GM12878 (cell line): ENCODE measurements at regions of chr17 and their contacts with region 1.

Region 1: GRCh38 chr17:27245230-27245696 is 48.7 kb upstream of the WSB1 start:
- DNase-seq: peak; percentile 51
- ATAC-seq: peak; percentile 94
- H3K4me3 ChIP-seq: no peak overlapping the region
- H3K27ac ChIP-seq: no peak overlapping the region
- H3K4me1 ChIP-seq: peaks cover 28% of the 10 kb centered on the region
- H3K27me3 ChIP-seq: no peaks in the 10 kb centered on the region
- CTCF ChIP-seq: peak; percentile 70 to 96 (median 74); a peak in 5 of 6 replicates
- EP300 ChIP-seq: no peak
- POLR2A ChIP-seq: no peak
- RAD21 ChIP-seq: peak; percentile 93

Region 2: GRCh38 chr17:27181935-27182334 is 63.3 kb before region 1 on chr17:
- CTCF ChIA-PET with region 1: no interaction called
- POLR2A ChIA-PET with region 1: no interaction called
- RAD21 ChIA-PET with region 1: no interaction called
- SMC1A ChIA-PET with region 1: no interaction called
- in situ Hi-C with region 1: no loop called
- intact Hi-C with region 1: no loop called
- DNase-seq: no peak
- ATAC-seq: no peak
- H3K4me3 ChIP-seq: no peak overlapping the region
- H3K27ac ChIP-seq: no peak overlapping the region
- H3K4me1 ChIP-seq: 0 out of 2 replicates have a peak, but pooled peaks cover 2% of the 10 kb centered on the region
- H3K27me3 ChIP-seq: no peaks in the 10 kb centered on the region
- CTCF ChIP-seq: no peak
- EP300 ChIP-seq: no peak
- POLR2A ChIP-seq: no peak
- RAD21 ChIP-seq: no peak

Region 3: DNA sequence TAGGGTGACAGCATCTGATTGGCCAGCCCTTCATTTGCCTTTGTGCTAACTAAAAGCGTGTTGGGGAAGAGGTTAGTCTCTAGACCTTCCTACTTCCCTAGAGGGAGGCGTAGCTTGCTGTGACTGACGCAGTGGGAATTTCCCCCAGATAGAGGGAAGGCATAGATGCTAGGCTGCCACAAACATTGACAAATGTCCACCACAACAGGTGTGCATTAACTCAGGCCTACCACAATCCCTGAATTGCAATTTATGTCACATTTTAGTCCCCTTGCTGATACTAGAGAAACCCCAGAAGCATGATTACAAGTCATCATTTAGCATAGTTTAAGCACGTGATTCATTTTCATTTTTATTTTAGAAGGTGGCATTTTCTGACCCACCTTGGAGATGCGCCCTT is 27.6 kb before region 1 on chr17:
- CTCF ChIA-PET with region 1: interaction called, 21 read pairs
- POLR2A ChIA-PET with region 1: interaction called, 8 read pairs
- RAD21 ChIA-PET with region 1: interaction called, 21 read pairs
- SMC1A ChIA-PET with region 1: interaction called, 137 read pairs
- in situ Hi-C with region 1: no loop called
- intact Hi-C with region 1: no loop called
- DNase-seq: peak; percentile 89
- ATAC-seq: peak; percentile 88
- H3K4me3 ChIP-seq: no peak overlapping the region
- H3K27ac ChIP-seq: peak overlapping the region; percentile 72
- H3K4me1 ChIP-seq: peaks cover 38% of the 10 kb centered on the region
- H3K27me3 ChIP-seq: no peaks in the 10 kb centered on the region
- CTCF ChIP-seq: no peak
- EP300 ChIP-seq: peak; percentile 78 to 79; a peak in 3 of 4 replicates
- POLR2A ChIP-seq: no peak
- RAD21 ChIP-seq: no peak

Region 4: DNA sequence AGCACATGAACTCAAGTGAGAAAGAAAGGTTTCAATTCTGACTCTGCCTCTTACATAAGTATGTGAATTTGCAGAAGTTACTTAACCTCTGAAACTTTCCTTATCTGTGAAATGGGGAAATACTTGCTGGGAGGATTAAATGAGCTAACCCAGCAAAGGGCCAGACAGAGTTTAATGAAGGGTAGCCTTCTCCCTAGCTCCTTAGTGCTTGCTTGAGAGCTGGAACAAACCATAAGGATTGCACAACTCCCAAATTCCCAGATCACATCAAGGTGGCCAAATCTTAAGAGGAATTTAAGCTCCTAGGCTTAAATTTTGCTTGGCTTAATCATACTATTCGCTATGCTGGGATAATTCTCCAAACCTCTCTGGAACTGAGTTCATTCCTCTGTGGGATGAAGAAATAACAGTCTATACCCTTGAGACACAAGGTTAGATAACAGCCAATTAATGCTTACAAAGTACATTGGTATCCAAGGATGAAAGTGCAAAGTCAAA is 36.8 kb after region 1 on chr17:
- CTCF ChIA-PET with region 1: interaction called, 10 read pairs
- POLR2A ChIA-PET with region 1: interaction called, 3 read pairs
- RAD21 ChIA-PET with region 1: interaction called, 12 read pairs
- SMC1A ChIA-PET with region 1: interaction called, 5 read pairs
- in situ Hi-C with region 1: no loop called
- intact Hi-C with region 1: no loop called
- DNase-seq: peak; percentile 49
- ATAC-seq: peak; percentile 98
- H3K4me3 ChIP-seq: no peak overlapping the region
- H3K27ac ChIP-seq: peak overlapping the region; percentile 62
- H3K4me1 ChIP-seq: peaks cover 14% of the 10 kb centered on the region
- H3K27me3 ChIP-seq: no peaks in the 10 kb centered on the region
- CTCF ChIP-seq: no peak
- EP300 ChIP-seq: peak in 1 of 2 experiments; percentile 53; a peak in 1 of 4 replicates
- POLR2A ChIP-seq: no peak
- RAD21 ChIP-seq: no peak

Region 5: DNA sequence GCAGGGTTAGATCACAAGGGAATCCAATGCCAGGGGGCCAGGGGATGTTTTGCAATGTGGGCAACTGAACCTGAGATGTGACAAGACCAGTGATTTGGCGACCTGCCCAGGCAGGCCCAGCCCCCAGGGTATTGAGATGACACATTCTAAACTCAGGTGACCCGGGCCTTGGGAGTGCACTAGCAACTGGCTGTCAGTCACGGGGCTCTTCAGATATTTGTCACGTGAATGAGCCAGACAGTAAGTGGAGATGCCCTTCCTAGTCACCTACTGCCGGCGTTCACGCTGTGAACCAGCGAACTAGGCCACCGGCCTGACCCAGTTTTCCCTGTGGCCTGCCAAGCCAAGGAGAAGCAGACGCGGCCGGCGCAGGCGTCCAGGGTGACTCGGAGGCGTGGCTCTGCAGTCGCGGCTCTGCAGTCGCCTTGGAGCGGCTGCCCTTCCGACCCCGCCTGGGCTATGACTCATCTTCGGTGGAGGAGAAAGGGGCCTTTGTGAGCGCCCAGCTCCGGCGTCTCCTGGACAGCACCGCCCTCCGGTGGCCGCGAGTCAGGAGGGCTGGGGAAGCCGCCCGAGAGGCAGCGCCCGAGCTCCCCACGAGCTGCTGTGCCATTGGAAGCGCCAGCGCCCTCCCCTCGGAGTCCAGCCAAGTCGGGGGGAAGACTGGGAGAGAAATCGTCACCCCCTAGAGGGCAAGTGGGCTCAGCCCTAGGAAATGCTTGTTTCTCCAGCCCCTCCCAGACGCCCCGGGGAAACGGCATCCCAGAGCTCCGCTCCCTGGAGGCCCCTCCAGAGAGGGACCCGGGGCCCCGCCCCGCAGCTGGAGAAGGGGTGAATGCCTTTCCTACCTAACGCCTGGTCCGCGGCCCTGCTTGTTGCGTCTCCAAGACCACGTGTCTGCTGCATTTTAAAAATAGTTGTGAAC is 87.5 kb after region 1 on chr17:
- CTCF ChIA-PET with region 1: interaction called, 58 read pairs
- POLR2A ChIA-PET with region 1: interaction called, 5 read pairs
- RAD21 ChIA-PET with region 1: interaction called, 156 read pairs
- SMC1A ChIA-PET with region 1: interaction called, 35 read pairs
- in situ Hi-C with region 1: no loop called
- intact Hi-C with region 1: loop called (anchors 1 kb)
- DNase-seq: peak; percentile 81
- ATAC-seq: peak; percentile 94
- H3K4me3 ChIP-seq: peak overlapping the region; percentile 67
- H3K27ac ChIP-seq: peak overlapping the region; percentile 72
- H3K4me1 ChIP-seq: peaks cover 20% of the 10 kb centered on the region
- H3K27me3 ChIP-seq: no peaks in the 10 kb centered on the region
- CTCF ChIP-seq: peak; percentile 64 to 96 (median 83); a peak in 5 of 6 replicates
- EP300 ChIP-seq: peak; percentile 48 to 59; a peak in 3 of 4 replicates
- POLR2A ChIP-seq: no peak
- RAD21 ChIP-seq: peak; percentile 87

Region 6: DNA sequence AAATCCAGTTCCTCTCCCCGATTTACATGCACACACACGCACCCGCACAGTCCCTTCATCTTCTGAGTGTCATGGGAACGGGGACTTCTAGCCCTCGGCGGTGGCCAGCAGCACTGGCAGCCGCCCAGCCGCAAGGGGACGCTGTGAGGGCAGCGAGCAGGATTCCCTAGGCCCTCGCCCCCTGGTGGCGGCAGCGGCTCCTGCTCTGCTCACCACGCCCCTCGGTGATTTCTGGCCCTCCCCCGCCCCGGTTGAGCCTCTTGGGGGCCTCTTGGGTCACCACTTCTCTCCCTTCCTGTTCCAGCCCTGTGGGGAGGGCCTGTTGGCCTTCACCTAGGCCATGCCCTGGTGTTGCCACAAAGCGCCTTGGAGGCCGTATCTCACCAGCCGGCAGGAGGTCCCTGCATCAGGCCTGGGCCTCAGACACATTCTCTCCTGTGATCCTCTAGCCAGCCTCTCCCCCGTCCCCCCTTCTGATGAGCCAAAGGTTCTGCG is 135.8 kb after region 1 on chr17:
- CTCF ChIA-PET with region 1: interaction called, 17 read pairs
- POLR2A ChIA-PET with region 1: no interaction called
- RAD21 ChIA-PET with region 1: no interaction called
- SMC1A ChIA-PET with region 1: interaction called, 5 read pairs
- in situ Hi-C with region 1: no loop called
- intact Hi-C with region 1: no loop called
- DNase-seq: peak; percentile 27
- ATAC-seq: peak; percentile 96
- H3K4me3 ChIP-seq: no peak overlapping the region
- H3K27ac ChIP-seq: no peak overlapping the region
- H3K4me1 ChIP-seq: peaks cover 14% of the 10 kb centered on the region
- H3K27me3 ChIP-seq: no peaks in the 10 kb centered on the region
- CTCF ChIP-seq: peak; percentile 100; a peak in 5 of 6 replicates
- EP300 ChIP-seq: no peak
- POLR2A ChIP-seq: no peak
- RAD21 ChIP-seq: peak; percentile 67

Region 7: DNA sequence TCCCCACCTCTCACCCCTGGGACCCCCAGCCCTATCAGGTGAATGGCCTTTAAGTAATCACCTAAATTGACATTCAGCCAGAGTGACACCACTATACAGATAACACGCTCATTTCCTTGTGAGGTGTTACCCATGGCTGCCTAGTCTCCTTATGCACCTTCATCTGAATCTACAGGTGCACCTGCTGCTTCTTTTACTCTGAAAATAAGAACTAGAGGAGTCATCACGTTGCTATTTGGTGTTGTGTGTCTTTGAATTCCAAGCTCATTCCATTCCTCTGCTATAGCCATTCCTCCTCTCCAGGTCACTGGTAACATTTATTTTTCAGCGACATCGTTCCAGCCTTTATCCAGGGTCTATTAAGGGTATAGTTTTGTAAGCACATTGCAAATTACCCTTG is 395.5 kb after region 1 on chr17:
- CTCF ChIA-PET with region 1: no interaction called
- POLR2A ChIA-PET with region 1: no interaction called
- RAD21 ChIA-PET with region 1: no interaction called
- SMC1A ChIA-PET with region 1: no interaction called
- in situ Hi-C with region 1: no loop called
- intact Hi-C with region 1: no loop called
- DNase-seq: no peak
- ATAC-seq: no peak
- H3K4me3 ChIP-seq: no peak overlapping the region
- H3K27ac ChIP-seq: no peak overlapping the region
- H3K4me1 ChIP-seq: no peaks in the 10 kb centered on the region
- H3K27me3 ChIP-seq: no peaks in the 10 kb centered on the region
- CTCF ChIP-seq: no peak
- EP300 ChIP-seq: no peak
- POLR2A ChIP-seq: no peak
- RAD21 ChIP-seq: no peak